RWPE1 (cell line): ENCODE measurements at regions of chr2 and their contacts with region 1.

Region 1: GRCh38 chr2:221270806-221271205 is 301.3 kb downstream of the EPHA4 start:
- DNase-seq: no peak
- H3K27ac ChIP-seq: no peak overlapping the region
- CTCF ChIP-seq: no peak

Region 2: DNA sequence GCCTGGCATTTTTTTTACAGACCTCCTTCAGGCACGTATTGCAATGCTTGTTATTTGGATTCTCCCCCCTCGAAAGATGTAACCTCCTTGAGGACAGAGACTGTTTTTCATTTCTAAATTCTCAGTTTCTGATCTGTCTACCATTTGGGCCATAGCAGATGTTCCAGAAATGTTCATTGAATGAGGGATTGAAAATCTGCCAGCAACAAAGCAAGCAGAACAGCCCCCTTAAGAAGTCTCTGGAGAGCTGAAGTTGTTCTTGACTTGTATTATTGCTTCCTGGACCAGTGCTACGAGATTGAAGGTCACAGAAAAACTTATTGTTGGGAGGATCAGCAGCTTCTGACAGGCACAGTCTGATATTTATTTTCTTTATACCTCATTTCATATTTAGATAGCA is 54.2 kb before region 1 on chr2:
- CTCF ChIA-PET with region 1: interaction called, 10 read pairs
- POLR2A ChIA-PET with region 1: no interaction called
- DNase-seq: no peak
- H3K27ac ChIP-seq: no peak overlapping the region
- CTCF ChIP-seq: no peak